Activated CD4-positive, alpha-beta T cell treated with anti-CD3 and anti-CD28 coated beads, Interleukin-2, amount 10 ng/mL, durations not matched to agents 24 days and 14 days (primary cell): ENCODE measurements at regions of chr12 and their contacts with region 1.

Region 1: GRCh38 chr12:102484428-102484958 is 4.1 kb upstream of the IGF1 start:
- DNase-seq: peak; percentile 88
- H3K4me3 Mint-ChIP-seq: peak overlapping the region; percentile 75
- H3K27ac Mint-ChIP-seq: peak overlapping the region; percentile 89
- H3K4me1 Mint-ChIP-seq: peaks cover 32% of the 10 kb centered on the region
- H3K27me3 Mint-ChIP-seq: no peaks in the 10 kb centered on the region

Region 2: DNA sequence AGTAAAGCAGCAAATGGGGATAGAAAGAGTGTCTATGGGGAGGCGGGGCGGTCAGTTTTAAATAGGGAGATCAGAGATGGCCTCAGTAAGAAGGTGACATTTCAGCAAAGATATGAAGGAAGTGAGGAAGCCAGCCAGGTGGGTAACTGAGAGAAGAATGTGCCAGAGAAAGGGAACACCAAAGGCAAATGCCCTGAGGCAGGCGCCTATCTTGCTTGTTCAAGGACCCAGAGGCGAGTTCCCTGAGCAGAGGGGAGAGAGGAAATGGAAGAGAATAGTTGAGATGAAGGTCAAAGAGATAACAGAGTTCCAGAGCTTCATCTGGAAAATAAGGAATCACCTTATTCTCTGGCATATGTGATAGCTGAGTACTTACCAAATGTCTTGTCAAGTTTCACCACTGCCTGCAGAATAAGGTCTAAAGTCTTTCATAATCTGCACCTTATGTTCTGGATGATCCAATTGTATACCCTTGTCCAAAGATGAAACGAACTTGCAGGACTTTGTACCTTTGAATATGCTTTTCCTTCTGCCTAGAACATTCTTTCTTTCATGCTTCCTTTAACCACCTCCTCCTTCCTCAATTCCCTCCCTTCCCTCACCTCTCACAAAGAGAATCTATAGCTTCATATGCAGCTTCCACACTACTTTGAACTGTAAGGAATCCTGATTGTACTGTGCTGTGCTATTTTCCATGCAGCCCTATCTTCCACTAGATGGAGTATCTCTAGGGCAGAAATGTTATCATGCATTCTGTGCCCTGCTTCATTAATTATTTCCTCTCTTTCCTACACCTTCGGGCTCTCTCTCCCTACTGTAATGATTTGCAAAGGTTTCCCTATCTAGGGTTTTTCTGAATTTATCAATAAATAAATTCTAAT is 692.2 kb before region 1 on chr12:
- intact Hi-C with region 1: loop called (anchors 10 kb)
- DNase-seq: no peak
- H3K4me3 Mint-ChIP-seq: no peak overlapping the region
- H3K27ac Mint-ChIP-seq: peak overlapping the region; percentile 72
- H3K4me1 Mint-ChIP-seq: peaks cover 40% of the 10 kb centered on the region
- H3K27me3 Mint-ChIP-seq: no peaks in the 10 kb centered on the region

Region 3: DNA sequence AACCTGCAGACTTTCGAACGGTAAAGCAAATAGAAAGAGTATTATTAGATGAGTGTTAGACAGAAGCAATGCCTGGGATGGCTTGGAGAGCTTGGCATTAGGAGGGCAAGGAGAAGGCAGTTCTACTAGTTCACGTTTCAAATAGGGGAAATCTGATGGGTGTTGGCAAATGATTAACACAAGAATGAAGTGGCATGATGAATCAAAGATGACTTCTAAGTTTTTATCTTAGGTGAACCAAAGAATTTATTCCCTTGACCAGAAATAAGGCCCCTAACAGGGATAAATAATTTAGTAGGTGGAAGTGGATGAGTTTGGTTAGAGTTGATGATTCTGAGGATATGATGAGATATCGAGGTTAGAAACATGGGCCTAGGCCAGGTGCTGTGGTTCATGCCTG is 568.6 kb before region 1 on chr12:
- intact Hi-C with region 1: loop called (anchors 2 kb)
- DNase-seq: no peak
- H3K4me3 Mint-ChIP-seq: no peak overlapping the region
- H3K27ac Mint-ChIP-seq: no peak overlapping the region
- H3K4me1 Mint-ChIP-seq: peaks cover 5% of the 10 kb centered on the region
- H3K27me3 Mint-ChIP-seq: no peaks in the 10 kb centered on the region

Region 4: GRCh38 chr12:102061560-102062418 is 422.7 kb before region 1 on chr12 and contains the start of gene WASHC3:
- intact Hi-C with region 1: loop called (anchors 1 kb)
- DNase-seq: peak; percentile 99
- H3K4me3 Mint-ChIP-seq: peak within 1 kb of the TSS; percentile 99
- H3K27ac Mint-ChIP-seq: peak within 1 kb of the TSS; percentile 99
- H3K4me1 Mint-ChIP-seq: peaks cover 33% of the 10 kb centered on the region
- H3K27me3 Mint-ChIP-seq: no peaks in the 10 kb centered on the region
- total RNA-seq, gene WASHC3: 29.0 and 33.1 TPM in 2 replicates

Region 5: GRCh38 chr12:102169922-102170621 is 314.4 kb before region 1 on chr12:
- intact Hi-C with region 1: loop called (anchors 2 kb)
- DNase-seq: peak; percentile 74
- H3K4me3 Mint-ChIP-seq: no peak overlapping the region
- H3K27ac Mint-ChIP-seq: no peak overlapping the region
- H3K4me1 Mint-ChIP-seq: peaks cover 20% of the 10 kb centered on the region
- H3K27me3 Mint-ChIP-seq: no peaks in the 10 kb centered on the region

Region 6: DNA sequence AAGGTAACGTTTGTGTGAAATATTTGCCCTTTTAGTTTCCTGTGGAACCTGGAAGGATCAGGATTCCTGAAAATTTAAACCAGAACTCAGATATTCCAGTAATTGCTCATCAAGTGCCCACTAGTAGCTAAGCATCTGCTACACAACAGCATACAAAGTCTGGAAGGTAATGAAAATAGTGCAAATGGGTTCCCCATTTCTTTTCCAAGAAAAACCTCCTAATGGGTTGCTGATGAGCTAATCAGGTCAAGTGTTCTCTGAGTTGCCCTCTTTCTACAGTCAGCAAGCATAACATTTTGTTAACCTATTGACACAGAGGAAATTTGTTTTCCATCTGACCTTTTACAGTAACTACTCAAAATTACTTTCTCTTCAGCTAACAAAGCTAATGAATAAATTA is 203.3 kb before region 1 on chr12:
- intact Hi-C with region 1: no loop called
- DNase-seq: no peak
- H3K4me3 Mint-ChIP-seq: no peak overlapping the region
- H3K27ac Mint-ChIP-seq: no peak overlapping the region
- H3K4me1 Mint-ChIP-seq: no peaks in the 10 kb centered on the region
- H3K27me3 Mint-ChIP-seq: peaks cover 6% of the 10 kb centered on the region

Region 7: DNA sequence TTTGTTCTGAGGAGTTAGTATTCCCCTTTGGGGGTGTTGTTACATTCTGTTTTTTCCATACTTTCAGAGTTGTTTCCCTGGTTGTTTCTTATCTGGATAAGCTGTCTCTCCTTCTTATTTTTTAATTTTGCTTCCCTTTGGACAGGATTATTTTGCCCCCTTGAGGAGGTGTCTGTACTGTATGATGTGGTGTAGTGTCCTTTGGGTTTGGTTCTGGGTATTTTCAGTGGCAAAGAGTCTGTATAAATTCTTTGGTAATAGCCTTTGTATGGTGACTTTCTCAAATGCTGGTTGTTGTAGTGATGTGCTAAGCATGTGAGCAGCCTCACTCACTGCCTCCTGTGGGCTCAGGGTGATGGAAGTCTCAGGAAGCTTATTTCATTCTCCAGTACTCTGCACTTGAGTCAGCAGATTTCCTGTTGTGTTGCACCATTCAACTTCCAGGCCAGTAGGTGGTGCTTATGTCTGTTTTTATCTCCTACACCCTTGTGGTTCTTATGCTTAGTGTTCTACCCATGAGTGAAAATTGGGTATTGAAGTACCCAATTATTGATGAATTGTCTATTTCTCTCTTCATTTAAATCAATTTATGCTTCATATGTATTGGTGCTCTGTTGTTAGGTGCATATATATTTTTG is 183.6 kb before region 1 on chr12:
- intact Hi-C with region 1: loop called (anchors 1 kb)
- DNase-seq: peak; percentile 80
- H3K4me3 Mint-ChIP-seq: no peak overlapping the region
- H3K27ac Mint-ChIP-seq: no peak overlapping the region
- H3K4me1 Mint-ChIP-seq: peaks cover 18% of the 10 kb centered on the region
- H3K27me3 Mint-ChIP-seq: peaks cover 16% of the 10 kb centered on the region

Region 8: DNA sequence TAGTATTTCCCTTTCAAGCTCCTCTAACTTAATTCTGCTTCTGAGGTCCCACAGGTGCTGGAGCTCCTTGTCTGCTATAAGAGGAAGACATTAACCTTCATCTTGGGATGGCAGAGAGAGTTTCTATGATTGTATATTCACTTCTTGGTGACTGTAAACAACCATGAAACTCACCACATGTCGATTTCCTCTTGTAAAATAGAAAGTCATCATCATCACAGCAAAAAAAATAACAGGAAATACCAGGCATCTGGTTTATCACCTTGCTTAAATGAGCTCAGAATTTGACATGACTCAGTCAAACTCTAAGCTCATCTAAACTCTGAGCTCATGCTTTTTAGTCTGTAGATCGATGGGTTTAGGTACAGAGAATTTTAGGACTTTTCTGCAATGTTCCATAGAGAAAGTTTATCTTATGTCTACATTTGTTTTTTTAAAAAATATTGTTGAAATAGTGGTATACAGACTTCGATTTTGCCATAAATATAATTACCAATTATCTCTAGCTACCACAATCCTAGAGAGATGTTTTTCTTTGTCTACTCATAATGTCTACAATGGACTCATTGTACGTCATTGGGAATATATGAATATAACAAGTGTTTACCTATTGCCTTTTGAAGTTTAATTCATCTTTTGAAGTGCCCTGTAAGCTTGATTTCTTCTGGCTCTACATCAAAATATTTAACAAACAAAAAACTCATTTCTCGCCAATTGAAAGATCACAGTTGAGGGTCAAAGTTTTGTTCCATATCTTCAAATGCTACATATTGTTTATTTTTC is 62.5 kb before region 1 on chr12:
- intact Hi-C with region 1: loop called (anchors 1 kb)
- DNase-seq: peak; percentile 64
- H3K4me3 Mint-ChIP-seq: peak overlapping the region; percentile 0
- H3K27ac Mint-ChIP-seq: peak overlapping the region; percentile 67
- H3K4me1 Mint-ChIP-seq: peaks cover 10% of the 10 kb centered on the region
- H3K27me3 Mint-ChIP-seq: peaks cover 4% of the 10 kb centered on the region

Region 9: DNA sequence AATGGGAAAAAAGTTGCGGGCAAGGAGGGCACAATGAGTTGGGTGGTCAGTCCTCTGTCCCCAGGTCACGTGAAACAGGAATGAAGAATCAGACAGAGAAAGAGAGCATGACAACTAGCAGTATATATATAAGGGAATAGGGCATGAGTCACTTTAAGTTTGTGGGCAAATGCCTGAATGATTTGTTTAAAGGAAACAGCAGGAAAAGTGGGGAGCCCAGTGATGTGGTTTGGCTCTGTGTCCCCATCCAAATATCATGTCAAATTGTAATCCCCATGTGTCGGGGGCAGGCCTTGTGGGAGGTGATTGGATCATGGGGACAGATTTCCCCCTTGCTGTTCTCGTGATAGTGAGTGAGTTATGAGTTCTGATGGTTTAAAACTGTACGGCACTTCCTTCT is 191.2 kb after region 1 on chr12:
- intact Hi-C with region 1: no loop called
- DNase-seq: no peak
- H3K4me3 Mint-ChIP-seq: no peak overlapping the region
- H3K27ac Mint-ChIP-seq: no peak overlapping the region
- H3K4me1 Mint-ChIP-seq: no peaks in the 10 kb centered on the region
- H3K27me3 Mint-ChIP-seq: no peaks in the 10 kb centered on the region